Activated CD4-positive, alpha-beta T cell treated with anti-CD3 and anti-CD28 coated beads, Interleukin-2, amount 10 ng/mL, durations not matched to agents 7 days and 5 days (primary cell): ENCODE measurements at regions of chr11 and their contacts with region 1.

Region 1: DNA sequence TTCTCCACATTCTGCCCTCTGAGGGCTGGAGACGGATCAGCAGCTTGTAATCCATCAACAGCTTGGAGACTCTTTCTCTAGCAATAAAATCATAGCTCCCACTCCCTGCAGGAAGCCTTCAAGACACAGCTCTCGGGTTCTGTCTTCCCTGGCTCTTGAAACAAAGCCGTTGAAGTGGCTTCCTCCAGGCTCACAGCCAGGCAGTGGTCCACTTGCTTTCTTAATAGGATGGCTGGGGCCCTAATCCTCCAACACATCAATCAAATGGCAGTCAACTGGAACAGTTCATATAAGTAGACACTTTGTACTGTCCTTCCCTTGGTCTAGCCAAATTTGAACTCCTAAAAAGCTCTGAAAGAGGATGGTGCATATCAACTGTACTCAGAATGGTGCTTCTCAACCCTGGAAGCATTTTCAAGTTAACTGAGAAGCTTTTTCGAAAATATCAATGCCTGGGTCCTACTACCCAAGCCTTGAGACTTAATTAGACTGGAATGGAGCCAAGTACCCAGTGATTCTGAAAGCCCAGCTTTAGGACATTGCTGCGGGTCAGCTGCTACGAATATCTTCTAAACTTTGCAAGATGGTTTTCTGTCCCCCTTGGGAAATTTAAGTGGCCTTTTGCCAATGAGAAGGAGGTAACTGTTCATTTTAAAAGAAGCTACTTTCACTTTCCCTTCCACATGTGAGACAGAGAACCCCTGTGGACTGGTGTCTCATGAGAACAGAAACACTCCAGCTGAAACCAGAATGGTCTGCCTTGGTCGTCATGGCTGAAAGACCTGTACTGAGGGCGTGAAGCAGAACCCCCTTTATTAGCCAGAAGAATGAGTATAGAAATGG is 74.7 kb downstream of the SC5D start:
- DNase-seq: peak; percentile 62
- H3K4me3 Mint-ChIP-seq: no peak overlapping the region
- H3K27ac Mint-ChIP-seq: peak overlapping the region; percentile 88
- H3K4me1 Mint-ChIP-seq: peaks cover 38% of the 10 kb centered on the region
- H3K27me3 Mint-ChIP-seq: no peaks in the 10 kb centered on the region

Region 2: DNA sequence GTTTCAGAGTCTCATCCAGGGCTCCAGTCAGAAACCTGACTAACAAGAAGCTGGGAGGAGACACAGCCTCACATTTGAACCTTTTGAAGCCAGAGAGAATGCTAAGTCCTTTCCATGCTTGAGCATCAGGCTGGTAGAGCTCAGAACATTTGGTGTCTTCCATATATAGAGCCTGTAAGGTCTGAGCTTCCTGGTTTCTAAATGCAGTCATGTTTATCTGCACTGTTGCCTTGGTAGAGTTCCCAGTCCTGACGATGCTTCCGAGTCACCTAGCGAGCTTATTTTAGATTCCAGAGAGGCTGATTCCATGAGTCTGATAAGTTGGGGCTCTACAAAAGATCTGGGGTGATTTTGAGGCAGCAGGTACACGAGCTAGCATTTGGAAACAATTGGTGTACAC is 16.5 kb after region 1 on chr11:
- CTCF ChIA-PET with region 1: interaction called, 11 read pairs
- POLR2A ChIA-PET with region 1: no interaction called
- DNase-seq: no peak
- H3K4me3 Mint-ChIP-seq: no peak overlapping the region
- H3K27ac Mint-ChIP-seq: peak overlapping the region; percentile 6
- H3K4me1 Mint-ChIP-seq: peaks cover 18% of the 10 kb centered on the region
- H3K27me3 Mint-ChIP-seq: no peaks in the 10 kb centered on the region

Region 3: DNA sequence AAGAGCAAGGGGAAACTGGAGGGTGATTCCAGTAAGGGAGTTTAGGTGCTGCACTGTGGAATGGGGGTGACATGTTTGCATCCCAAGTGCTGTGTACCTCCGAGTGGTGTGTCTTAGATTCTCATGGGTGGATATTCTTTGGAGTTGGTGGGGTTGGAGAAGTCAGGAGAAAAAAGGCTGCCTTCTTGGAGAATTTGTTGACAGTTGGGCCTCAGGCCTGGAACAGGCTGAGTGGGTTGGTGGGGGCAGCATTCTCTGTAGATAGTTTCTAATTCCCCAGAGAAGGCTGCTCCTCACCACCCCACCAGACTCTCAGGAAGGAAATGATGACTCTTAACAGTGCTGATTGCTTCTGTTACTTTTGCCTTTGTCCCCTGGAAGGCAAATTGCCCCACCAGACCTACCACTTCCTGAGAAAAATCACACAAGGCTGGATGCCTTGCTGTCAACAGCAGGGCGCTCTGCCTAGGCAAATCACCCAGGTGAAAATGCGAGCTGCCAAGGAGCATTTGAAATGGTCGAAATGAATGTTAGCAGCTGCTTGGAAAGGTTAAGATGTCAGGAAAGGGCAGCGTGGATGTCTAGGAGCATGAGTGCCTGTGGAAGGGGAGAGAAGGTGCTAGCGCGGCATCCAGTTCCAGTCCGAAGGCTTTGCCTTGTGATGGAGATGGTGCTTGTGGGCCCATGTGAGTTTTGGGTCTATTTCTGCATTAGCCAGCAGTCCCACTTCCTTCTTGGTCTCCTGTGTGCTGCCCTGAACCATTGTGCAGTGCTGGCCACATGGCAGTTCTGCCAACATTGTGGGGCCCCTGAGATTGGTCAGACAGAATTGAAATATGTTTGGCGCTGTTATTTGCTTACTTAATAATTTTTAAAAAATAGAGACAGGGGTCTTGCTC is 115.3 kb after region 1 on chr11:
- CTCF ChIA-PET with region 1: no interaction called
- POLR2A ChIA-PET with region 1: no interaction called
- DNase-seq: peak; percentile 72
- H3K4me3 Mint-ChIP-seq: peak overlapping the region; percentile 64
- H3K27ac Mint-ChIP-seq: peak overlapping the region; percentile 92
- H3K4me1 Mint-ChIP-seq: peaks cover 73% of the 10 kb centered on the region
- H3K27me3 Mint-ChIP-seq: no peaks in the 10 kb centered on the region